ENCODE measurements at regions of chr12 and their contacts with region 1.

Region 1: DNA sequence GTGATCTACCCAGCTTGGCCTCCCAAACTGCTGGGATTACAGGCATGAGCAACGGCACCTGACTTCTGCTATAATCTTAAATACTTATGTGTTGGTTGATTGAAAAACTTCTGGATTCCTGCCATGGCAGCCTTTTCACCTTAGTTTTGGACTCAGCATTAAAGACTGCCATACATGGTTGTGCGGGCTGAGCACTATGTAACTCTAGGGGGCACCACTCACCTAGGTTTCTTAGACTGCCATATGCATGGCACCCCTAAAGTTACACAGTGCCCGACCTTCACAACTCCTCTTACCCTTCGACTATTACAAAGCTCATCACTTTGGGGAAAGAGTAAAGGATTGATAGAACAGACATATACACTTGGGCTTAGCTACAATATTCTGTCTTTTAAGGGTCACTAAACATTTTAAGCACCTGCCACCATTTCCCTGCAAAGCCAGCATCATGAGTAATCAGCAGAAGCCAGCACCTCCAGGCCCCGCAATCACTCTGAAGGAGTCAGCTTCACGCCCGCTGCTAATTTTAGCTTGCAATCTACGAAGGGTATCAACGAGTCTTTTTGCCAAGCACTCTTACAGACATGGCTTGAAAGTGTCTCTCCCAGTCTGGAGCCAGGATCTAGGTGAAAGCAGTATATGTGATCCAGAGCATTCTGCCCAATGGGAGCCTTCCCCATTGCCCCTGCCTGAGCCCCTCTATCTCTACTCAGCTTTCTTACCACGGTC is 59.8 kb downstream of the SUDS3 start:
- DNase-seq: no peak
- H3K4me3 ChIP-seq: no peak overlapping the region
- H3K27ac ChIP-seq: no peak overlapping the region
- H3K4me1 ChIP-seq: no peaks in the 10 kb centered on the region
- H3K27me3 ChIP-seq: no peaks in the 10 kb centered on the region
- CTCF ChIP-seq: no peak

Region 2: DNA sequence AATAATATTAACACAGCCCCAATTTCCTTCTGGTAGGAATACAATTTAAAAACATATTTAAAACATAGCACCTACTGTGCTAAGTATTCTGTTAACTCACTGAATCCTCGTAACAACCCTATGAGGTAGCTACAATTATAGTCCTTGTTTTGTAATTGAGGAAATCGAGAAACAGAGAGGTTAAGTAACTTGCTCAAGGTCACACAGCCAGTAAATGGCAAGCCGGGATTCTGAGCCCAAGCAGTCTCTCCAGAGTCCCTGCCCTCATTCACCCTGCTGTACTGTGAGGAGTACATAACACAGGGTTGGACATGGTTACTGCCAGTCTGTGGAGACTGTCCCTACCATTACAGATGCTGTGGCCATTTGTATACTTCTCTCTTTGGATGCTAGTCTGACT is 15.5 kb before region 1 on chr12:
- intact Hi-C with region 1: loop called (anchors 1 kb)
- DNase-seq: no peak
- H3K4me3 ChIP-seq: no peak overlapping the region
- H3K27ac ChIP-seq: no peak overlapping the region
- H3K4me1 ChIP-seq: peaks cover 0 to 10% (median 0%) of the 10 kb centered on the region in 4 donors
- H3K27me3 ChIP-seq: no peaks in the 10 kb centered on the region
- CTCF ChIP-seq: no peak

Region 3: DNA sequence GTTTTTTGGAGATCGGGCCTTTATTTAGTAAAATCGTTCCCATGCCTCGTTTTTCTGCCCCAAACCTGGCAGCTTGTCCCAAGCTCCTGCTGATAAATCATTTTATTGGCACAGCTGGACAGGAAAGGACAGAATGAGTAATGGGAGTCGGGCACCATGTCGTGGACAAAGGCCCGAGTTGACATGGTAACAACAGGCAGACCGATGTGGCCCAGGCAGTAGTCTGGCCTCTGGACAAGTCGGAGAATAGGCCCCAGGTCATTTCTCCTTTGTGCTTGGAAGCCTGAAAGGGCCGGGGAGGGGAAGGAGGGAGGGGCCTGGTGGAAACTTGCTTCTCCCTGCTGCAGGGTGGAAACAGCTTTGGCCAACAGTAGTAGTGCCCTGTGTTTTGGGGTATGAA is 175.1 kb after region 1 on chr12:
- intact Hi-C with region 1: loop called (anchors 10 kb)
- DNase-seq: no peak
- H3K4me3 ChIP-seq: no peak overlapping the region
- H3K27ac ChIP-seq: no peak overlapping the region
- H3K4me1 ChIP-seq: no peaks in the 10 kb centered on the region
- H3K27me3 ChIP-seq: no peaks in the 10 kb centered on the region
- CTCF ChIP-seq: no peak

Region 4: DNA sequence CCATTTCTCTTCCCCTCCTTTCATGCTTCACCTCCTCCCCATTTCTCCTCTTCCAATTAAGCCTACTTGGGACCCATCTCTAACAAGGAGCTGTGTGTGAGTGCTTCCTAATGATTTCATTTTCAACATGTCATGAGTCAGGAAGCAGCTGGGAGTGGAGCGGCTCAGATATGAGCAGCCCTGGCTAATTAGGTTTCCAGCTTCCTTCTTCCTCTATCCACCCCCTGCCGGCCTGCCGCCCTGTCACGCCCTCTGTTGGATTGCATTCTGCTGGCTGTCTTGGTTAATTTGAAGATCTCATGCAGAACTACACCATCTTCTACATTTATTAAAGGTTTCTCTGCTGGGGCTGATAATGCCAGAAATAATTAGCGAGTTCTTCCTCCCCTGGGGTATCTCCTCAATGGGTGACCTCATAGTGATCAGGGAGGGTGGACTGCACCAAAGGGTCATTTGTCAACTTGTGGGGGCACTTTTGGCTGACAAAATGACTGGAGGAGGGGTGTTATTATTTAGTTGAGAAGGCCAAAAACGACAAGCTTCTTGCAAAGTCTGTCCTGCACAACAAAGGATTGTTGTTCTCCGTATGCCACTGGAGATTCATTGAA is 244.3 kb after region 1 on chr12:
- intact Hi-C with region 1: no loop called
- DNase-seq: no peak
- H3K4me3 ChIP-seq: no peak overlapping the region
- H3K27ac ChIP-seq: no peak overlapping the region
- H3K4me1 ChIP-seq: no peaks in the 10 kb centered on the region
- H3K27me3 ChIP-seq: no peaks in the 10 kb centered on the region
- CTCF ChIP-seq: no peak

Measured in tibial artery (tissue), 4 donors.